Activated T-helper 2 cell treated with anti-CD3 and anti-CD28 coated beads, Interferon-gamma antibody, Interleukin-2, Interleukin-4, amounts not matched to agents 10 μg/mL and 5 μg/mL and 100 μg/mL, durations not matched to agents 14 hours and 24 hours and 36 hours (primary cell): ENCODE measurements at regions of chr17 and their contacts with region 1.

Region 1: DNA sequence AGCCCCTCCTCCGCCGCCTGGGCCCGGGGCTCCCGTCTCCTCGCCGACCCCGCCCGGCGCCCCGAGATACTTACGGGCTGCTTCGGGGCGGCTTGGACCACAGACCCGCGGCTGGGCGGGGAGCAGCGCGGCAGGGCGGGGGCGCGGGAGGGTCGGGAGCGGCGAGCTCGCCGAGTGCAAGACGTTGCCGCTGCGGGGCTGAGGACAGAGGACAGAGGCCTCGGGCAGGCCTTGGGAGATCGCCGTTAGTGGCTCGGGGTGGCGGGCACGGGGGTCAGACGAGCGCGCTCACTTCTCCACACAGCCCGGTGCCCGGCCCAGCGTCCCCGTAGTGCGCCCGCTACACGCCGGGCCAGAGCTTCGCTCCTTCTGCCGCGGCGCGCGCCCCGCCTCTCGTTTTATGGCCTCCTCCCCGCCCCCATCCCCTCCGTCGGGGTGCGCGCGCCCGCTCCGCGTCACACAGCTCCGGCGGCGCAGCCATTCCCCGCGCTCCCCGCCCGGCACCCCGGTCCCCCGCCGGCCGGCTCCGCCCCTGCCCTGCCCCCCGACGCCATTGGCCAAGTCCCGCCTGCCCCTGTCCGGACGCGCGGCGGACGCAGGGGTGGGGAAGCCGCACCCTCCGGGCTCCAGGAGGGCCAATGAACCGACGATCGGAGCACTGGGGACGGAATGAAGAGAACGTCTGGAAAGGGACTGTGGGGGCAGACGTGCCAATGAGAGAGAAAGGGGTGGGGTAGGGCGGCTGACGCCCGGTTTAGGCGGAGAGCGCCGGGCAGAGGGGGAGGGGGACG is at the start of gene TOB1:
- DNase-seq: peak; percentile 92
- H3K4me3 Mint-ChIP-seq: peak within 1 kb of the TSS; percentile 98
- H3K27ac Mint-ChIP-seq: peak within 1 kb of the TSS; percentile 97
- H3K4me1 Mint-ChIP-seq: peaks cover 42% of the 10 kb centered on the region
- H3K27me3 Mint-ChIP-seq: no peaks in the 10 kb centered on the region
- total RNA-seq, gene TOB1: 28.5 and 28.9 TPM in 2 replicates

Region 2: GRCh38 chr17:50719144-50719923 is 146.8 kb before region 1 on chr17 and contains the start of gene LUC7L3:
- intact Hi-C with region 1: loop called (anchors 5 kb)
- DNase-seq: peak; percentile 94
- H3K4me3 Mint-ChIP-seq: peak within 1 kb of the TSS; percentile 94
- H3K27ac Mint-ChIP-seq: peak within 1 kb of the TSS; percentile 99
- H3K4me1 Mint-ChIP-seq: peaks cover 14% of the 10 kb centered on the region
- H3K27me3 Mint-ChIP-seq: no peaks in the 10 kb centered on the region
- total RNA-seq, gene LUC7L3: 115 and 134 TPM in 2 replicates

Region 3: DNA sequence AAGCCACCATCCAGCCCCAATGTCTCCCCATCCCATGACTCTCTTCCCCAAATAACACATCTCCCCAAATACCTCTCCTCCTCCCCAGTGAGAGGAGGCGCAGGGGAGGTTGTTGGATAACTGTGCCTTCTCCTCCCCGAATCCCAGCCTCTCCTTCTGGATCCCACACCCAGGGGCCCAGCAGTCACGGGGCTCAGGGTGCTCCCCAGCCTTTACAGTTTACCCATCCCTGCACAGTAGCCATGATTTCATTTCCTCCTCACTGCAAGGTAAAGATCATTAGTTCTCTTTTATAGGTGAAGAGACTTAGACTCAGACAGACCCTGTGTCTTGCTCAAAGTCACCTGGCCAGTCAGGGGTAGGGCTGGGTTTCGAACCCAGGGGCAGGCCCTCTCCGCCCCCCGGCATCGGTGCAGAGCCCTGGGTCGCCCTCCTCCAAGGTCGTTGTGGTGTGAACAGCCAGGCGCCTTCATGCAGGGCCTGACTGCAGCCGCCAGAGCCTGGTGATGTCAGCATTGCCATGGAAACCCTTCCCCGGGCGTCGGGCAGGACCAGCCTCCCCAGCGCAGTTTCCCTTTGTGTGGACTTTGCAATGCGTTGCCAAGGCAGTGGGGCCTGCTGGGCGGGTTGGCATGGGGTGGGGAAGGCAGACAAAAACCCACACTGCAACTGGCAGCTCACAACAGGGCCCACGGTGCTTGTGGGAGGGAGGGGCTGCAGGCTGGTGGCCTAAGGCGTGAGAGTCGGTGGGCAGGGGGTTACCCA is 53.3 kb after region 1 on chr17:
- intact Hi-C with region 1: loop called (anchors 2 kb)
- DNase-seq: peak; percentile 81
- H3K4me3 Mint-ChIP-seq: peak overlapping the region; percentile 13
- H3K27ac Mint-ChIP-seq: peak overlapping the region; percentile 84
- H3K4me1 Mint-ChIP-seq: peaks cover 30% of the 10 kb centered on the region
- H3K27me3 Mint-ChIP-seq: no peaks in the 10 kb centered on the region

Region 4: GRCh38 chr17:51120739-51121617 is 254.8 kb after region 1 on chr17 and contains the start of gene SPAG9:
- intact Hi-C with region 1: loop called (anchors 2 kb)
- DNase-seq: peak; percentile 93
- H3K4me3 Mint-ChIP-seq: peak within 1 kb of the TSS; percentile 93
- H3K27ac Mint-ChIP-seq: peak within 1 kb of the TSS; percentile 99
- H3K4me1 Mint-ChIP-seq: peaks cover 44% of the 10 kb centered on the region
- H3K27me3 Mint-ChIP-seq: no peaks in the 10 kb centered on the region
- total RNA-seq, gene SPAG9: 48.1 and 48.3 TPM in 2 replicates

Region 5: DNA sequence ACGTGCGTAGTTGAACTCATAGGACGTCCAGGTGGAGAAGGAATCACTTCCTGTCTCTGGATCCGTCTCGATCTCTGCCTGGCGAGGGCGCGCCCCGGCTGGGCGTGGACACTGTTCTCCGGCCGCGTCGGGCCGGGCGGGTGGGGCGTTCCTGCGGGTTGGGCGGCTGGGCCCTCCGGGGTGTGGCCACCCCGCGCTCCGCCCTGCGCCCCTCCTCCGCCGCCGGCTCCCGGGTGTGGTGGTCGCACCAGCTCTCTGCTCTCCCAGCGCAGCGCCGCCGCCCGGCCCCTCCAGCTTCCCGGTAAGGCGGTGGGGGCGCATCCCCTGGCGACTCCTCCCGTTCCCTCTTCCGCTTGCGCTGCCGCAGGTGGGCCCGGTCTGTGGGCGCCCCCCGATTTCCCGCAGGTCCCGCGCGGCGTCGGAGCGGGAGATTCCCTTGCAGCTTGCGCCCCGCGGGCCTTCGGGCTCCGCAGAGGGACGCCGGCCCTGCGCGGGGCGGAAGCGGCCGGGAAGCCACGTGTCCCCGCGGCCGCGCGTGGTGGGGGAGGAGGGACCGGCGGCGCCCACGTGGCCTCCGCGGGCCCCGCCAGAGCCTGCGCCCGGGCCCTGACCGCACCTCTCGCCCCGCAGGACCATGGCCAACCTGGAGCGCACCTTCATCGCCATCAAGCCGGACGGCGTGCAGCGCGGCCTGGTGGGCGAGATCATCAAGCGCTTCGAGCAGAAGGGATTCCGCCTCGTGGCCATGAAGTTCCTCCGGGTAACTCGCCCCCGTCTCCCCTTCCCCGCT is 300.2 kb after region 1 on chr17 and contains the start of gene NME2:
- intact Hi-C with region 1: loop called (anchors 5 kb)
- DNase-seq: peak; percentile 68
- H3K4me3 Mint-ChIP-seq: peak within 1 kb of the TSS; percentile 89
- H3K27ac Mint-ChIP-seq: peak within 1 kb of the TSS; percentile 90
- H3K4me1 Mint-ChIP-seq: peaks cover 26% of the 10 kb centered on the region
- H3K27me3 Mint-ChIP-seq: no peaks in the 10 kb centered on the region
- total RNA-seq, gene NME2: 708 and 735 TPM in 2 replicates